ENCODE measurements at regions of chr9 and their contacts with region 1.

Region 1: GRCh38 chr9:37362430-37362829 is 60.1 kb upstream of the GRHPR start:
- DNase-seq: no peak
- H3K4me3 ChIP-seq: no peak overlapping the region
- H3K27ac ChIP-seq: no peak overlapping the region
- H3K4me1 ChIP-seq: no peaks in the 10 kb centered on the region
- H3K27me3 ChIP-seq: no peaks in the 10 kb centered on the region
- CTCF ChIP-seq: no peak
- EP300 ChIP-seq: no peak
- POLR2A ChIP-seq: no peak

Region 2: DNA sequence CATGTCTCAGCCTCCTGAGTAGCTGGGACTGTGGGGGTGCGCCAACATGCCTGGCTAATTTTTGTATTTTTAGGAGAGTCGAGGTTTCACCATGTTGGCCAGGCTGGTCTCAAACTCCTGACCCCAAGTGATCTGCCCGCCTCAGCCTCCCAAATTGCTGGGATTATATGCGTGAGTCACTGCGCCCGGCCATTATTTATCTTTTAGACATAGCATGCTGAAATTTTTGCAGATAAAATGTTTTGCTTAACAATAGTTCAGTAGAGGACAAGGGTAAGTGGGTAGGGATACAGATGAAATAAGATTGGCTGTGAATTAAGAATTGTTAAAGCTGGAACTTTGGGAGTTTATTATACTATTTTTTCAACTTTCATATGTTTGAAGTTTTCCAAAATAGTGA is 90.8 kb before region 1 on chr9:
- intact Hi-C with region 1: no loop called
- DNase-seq: no peak
- H3K4me3 ChIP-seq: no peak overlapping the region
- H3K27ac ChIP-seq: no peak overlapping the region
- H3K4me1 ChIP-seq: no peaks in the 10 kb centered on the region
- H3K27me3 ChIP-seq: no peaks in the 10 kb centered on the region
- CTCF ChIP-seq: no peak
- EP300 ChIP-seq: no peak
- POLR2A ChIP-seq: no peak

Region 3: GRCh38 chr9:37390759-37391158 is 28.3 kb after region 1 on chr9:
- intact Hi-C with region 1: loop called in 1 of 4 experiments (anchors 1 kb)
- DNase-seq: no peak
- H3K4me3 ChIP-seq: no peak overlapping the region
- H3K27ac ChIP-seq: no peak overlapping the region
- H3K4me1 ChIP-seq: no peaks in the 10 kb centered on the region
- H3K27me3 ChIP-seq: no peaks in the 10 kb centered on the region
- CTCF ChIP-seq: no peak
- EP300 ChIP-seq: no peak
- POLR2A ChIP-seq: no peak

Measured in ovary (tissue), 10 donors.